OCI-LY7 (cell line): ENCODE measurements at regions of chr15 and their contacts with region 1.

Region 1: GRCh38 chr15:39692356-39693327 is 90.0 kb downstream of the FSIP1 start:
- DNase-seq: no peak
- H3K4me3 ChIP-seq: no peak overlapping the region
- H3K27ac ChIP-seq: no peak overlapping the region
- H3K4me1 ChIP-seq: no peaks in the 10 kb centered on the region
- CTCF ChIP-seq: no peak

Region 2: GRCh38 chr15:39530466-39531342 is 161.9 kb before region 1 on chr15:
- CTCF ChIA-PET with region 1: no interaction called
- POLR2A ChIA-PET with region 1: no interaction called
- intact Hi-C with region 1: no loop called
- DNase-seq: no peak
- H3K4me3 ChIP-seq: no peak overlapping the region
- H3K27ac ChIP-seq: no peak overlapping the region
- H3K4me1 ChIP-seq: no peaks in the 10 kb centered on the region
- CTCF ChIP-seq: no peak

Region 3: DNA sequence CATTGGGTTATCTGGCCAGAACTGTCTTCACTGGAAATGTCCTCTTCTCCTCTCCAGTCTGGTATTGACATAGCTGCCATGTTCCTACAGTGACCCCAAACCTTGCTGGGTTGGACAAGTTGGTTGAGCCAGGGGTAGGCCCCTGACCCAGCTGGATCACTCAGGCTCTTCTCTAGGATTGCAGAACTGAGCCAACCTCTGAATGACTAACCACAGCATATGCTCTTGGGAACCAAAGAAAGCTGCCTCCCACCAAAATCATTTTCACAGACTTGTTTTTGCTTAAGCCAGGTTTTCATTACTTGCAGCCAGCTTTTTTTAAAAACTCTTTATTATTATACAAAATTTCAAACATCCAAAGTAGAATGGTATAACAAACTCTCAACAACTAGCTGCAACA is 48.6 kb after region 1 on chr15:
- CTCF ChIA-PET with region 1: no interaction called
- POLR2A ChIA-PET with region 1: no interaction called
- intact Hi-C with region 1: loop called (anchors 5 kb)
- DNase-seq: no peak
- H3K4me3 ChIP-seq: no peak overlapping the region
- H3K27ac ChIP-seq: no peak overlapping the region
- H3K4me1 ChIP-seq: no peaks in the 10 kb centered on the region
- CTCF ChIP-seq: no peak